ENCODE measurements at regions of chr14 and their contacts with region 1.

Region 1: DNA sequence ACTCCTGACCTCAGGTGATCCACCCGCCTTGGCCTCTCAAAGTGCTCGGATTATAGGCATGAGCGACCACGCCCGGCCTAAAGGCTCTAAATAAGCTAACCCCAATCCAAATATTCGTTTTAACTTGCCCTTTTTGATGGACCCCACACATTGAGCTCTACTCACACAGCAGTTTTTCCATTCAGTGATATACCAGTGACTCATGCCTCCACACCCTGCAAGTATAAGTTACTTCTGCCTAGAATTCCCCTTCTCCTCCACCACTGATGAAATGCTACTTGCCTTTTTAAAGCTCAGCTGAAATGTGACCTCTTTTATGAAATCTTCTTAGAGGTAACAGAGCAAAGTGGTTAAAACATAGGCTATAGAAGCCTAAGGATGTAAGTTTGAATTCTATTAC is 68.8 kb downstream of the EXOC5 start:
- DNase-seq: no peak
- ATAC-seq: no peak
- H3K4me3 ChIP-seq: no peak overlapping the region
- H3K4me3 Mint-ChIP-seq: no peak overlapping the region
- H3K27ac ChIP-seq: no peak overlapping the region
- H3K27ac Mint-ChIP-seq: no peak overlapping the region
- H3K4me1 ChIP-seq: no peaks in the 10 kb centered on the region
- H3K4me1 Mint-ChIP-seq: no peaks in the 10 kb centered on the region
- H3K27me3 ChIP-seq: no peaks in the 10 kb centered on the region
- H3K27me3 Mint-ChIP-seq: peaks cover 9% of the 10 kb centered on the region
- CTCF ChIP-seq: no peak

Region 2: GRCh38 chr14:57189070-57189469 is 10.9 kb before region 1 on chr14:
- CTCF ChIA-PET with region 1: no interaction called
- POLR2A ChIA-PET with region 1: no interaction called
- intact Hi-C with region 1: no loop called
- DNase-seq: no peak
- ATAC-seq: no peak
- H3K4me3 ChIP-seq: no peak overlapping the region
- H3K4me3 Mint-ChIP-seq: no peak overlapping the region
- H3K27ac ChIP-seq: no peak overlapping the region
- H3K27ac Mint-ChIP-seq: no peak overlapping the region
- H3K4me1 ChIP-seq: no peaks in the 10 kb centered on the region
- H3K4me1 Mint-ChIP-seq: peaks cover 2% of the 10 kb centered on the region
- H3K27me3 ChIP-seq: peaks cover 0 to 6% (median 2%) of the 10 kb centered on the region in 4 experiments
- H3K27me3 Mint-ChIP-seq: peaks cover 33% of the 10 kb centered on the region
- CTCF ChIP-seq: no peak

Region 3: DNA sequence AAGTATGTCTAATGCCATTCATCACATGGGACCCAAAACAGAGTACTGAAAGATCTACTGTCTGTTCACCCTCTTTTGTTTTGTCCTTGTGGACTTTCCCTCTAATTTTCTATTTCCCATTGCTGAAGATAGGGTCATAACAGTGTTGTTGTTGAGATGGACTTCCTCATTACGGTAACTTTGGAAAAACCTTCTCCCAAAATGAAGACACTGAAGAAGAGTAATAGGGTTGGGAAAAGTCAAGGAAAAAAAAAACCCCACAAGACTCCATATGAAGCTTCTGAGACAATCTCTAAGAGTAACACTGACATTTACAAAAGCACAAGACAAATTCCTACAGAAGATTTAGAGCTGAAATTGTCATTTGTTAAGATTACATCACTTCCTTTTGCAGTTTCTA is 32.1 kb after region 1 on chr14:
- CTCF ChIA-PET with region 1: no interaction called
- POLR2A ChIA-PET with region 1: no interaction called
- intact Hi-C with region 1: no loop called
- DNase-seq: no peak
- ATAC-seq: no peak
- H3K4me3 ChIP-seq: no peak overlapping the region
- H3K4me3 Mint-ChIP-seq: no peak overlapping the region
- H3K27ac ChIP-seq: no peak overlapping the region
- H3K27ac Mint-ChIP-seq: no peak overlapping the region
- H3K4me1 ChIP-seq: no peaks in the 10 kb centered on the region
- H3K4me1 Mint-ChIP-seq: no peaks in the 10 kb centered on the region
- H3K27me3 ChIP-seq: no peaks in the 10 kb centered on the region
- H3K27me3 Mint-ChIP-seq: no peaks in the 10 kb centered on the region
- CTCF ChIP-seq: no peak

Region 4: GRCh38 chr14:57293866-57294837 is 94.2 kb after region 1 on chr14:
- CTCF ChIA-PET with region 1: interaction called, 3 read pairs
- POLR2A ChIA-PET with region 1: no interaction called
- intact Hi-C with region 1: loop called (anchors 10 kb)
- DNase-seq: no peak
- ATAC-seq: no peak
- H3K4me3 ChIP-seq: no peak overlapping the region
- H3K4me3 Mint-ChIP-seq: no peak overlapping the region
- H3K27ac ChIP-seq: no peak overlapping the region
- H3K27ac Mint-ChIP-seq: no peak overlapping the region
- H3K4me1 ChIP-seq: no peaks in the 10 kb centered on the region
- H3K4me1 Mint-ChIP-seq: no peaks in the 10 kb centered on the region
- H3K27me3 ChIP-seq: no peaks in the 10 kb centered on the region
- H3K27me3 Mint-ChIP-seq: no peaks in the 10 kb centered on the region
- CTCF ChIP-seq: peak; percentile 65